A673 (cell line): ENCODE measurements at regions of chr12 and their contacts with region 1.

Region 1: GRCh38 chr12:95532851-95533250 is 18.4 kb downstream of the USP44 start:
- DNase-seq: no peak
- H3K4me3 ChIP-seq: no peak overlapping the region
- H3K27ac ChIP-seq: no peak overlapping the region
- H3K4me1 ChIP-seq: no peaks in the 10 kb centered on the region
- H3K27me3 ChIP-seq: no peaks in the 10 kb centered on the region
- CTCF ChIP-seq: no peak

Region 2: GRCh38 chr12:94133964-94134795 is 1398.7 kb before region 1 on chr12:
- CTCF ChIA-PET with region 1: no interaction called
- POLR2A ChIA-PET with region 1: no interaction called
- intact Hi-C with region 1: loop called (anchors 10 kb)
- DNase-seq: peak; percentile 70
- H3K4me3 ChIP-seq: no peak overlapping the region
- H3K27ac ChIP-seq: no peak overlapping the region
- H3K4me1 ChIP-seq: no peaks in the 10 kb centered on the region
- H3K27me3 ChIP-seq: peaks cover 4% of the 10 kb centered on the region
- CTCF ChIP-seq: peak; percentile 76

Region 3: GRCh38 chr12:94545935-94546771 is 986.7 kb before region 1 on chr12:
- CTCF ChIA-PET with region 1: no interaction called
- POLR2A ChIA-PET with region 1: no interaction called
- intact Hi-C with region 1: loop called (anchors 10 kb)
- DNase-seq: peak; percentile 40
- H3K4me3 ChIP-seq: no peak overlapping the region
- H3K27ac ChIP-seq: no peak overlapping the region
- H3K4me1 ChIP-seq: no peaks in the 10 kb centered on the region
- H3K27me3 ChIP-seq: no peaks in the 10 kb centered on the region
- CTCF ChIP-seq: peak; percentile 59

Region 4: DNA sequence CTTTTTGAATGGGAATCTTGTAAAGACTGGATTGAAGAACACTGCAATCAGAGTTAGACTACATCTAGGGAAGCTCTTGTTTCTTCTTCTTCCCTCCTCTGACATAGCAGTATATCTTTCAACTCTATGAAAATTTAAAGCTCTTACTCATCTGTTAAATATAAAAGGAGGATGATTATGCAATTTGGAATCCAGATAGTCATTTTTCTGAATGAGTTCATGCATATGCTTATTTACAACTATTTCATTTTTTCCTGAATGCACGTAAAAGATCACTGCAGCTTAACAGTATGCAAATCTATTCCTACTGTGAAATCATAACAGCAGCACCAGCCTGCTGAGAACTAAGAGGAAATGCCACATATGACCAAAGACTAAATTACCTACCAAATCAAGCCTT is 749.0 kb before region 1 on chr12:
- CTCF ChIA-PET with region 1: no interaction called
- POLR2A ChIA-PET with region 1: no interaction called
- intact Hi-C with region 1: loop called (anchors 10 kb)
- DNase-seq: peak; percentile 78
- H3K4me3 ChIP-seq: no peak overlapping the region
- H3K27ac ChIP-seq: peak overlapping the region; percentile 12
- H3K4me1 ChIP-seq: peaks cover 6% of the 10 kb centered on the region
- H3K27me3 ChIP-seq: no peaks in the 10 kb centered on the region
- CTCF ChIP-seq: no peak

Region 5: GRCh38 chr12:95117178-95117599 is 415.7 kb before region 1 on chr12:
- CTCF ChIA-PET with region 1: interaction called, 17 read pairs
- POLR2A ChIA-PET with region 1: no interaction called
- intact Hi-C with region 1: loop called (anchors 2 kb)
- DNase-seq: peak; percentile 84
- H3K4me3 ChIP-seq: no peak overlapping the region
- H3K27ac ChIP-seq: no peak overlapping the region
- H3K4me1 ChIP-seq: no peaks in the 10 kb centered on the region
- H3K27me3 ChIP-seq: no peaks in the 10 kb centered on the region
- CTCF ChIP-seq: peak; percentile 78

Region 6: GRCh38 chr12:95336390-95337067 is 196.3 kb before region 1 on chr12:
- CTCF ChIA-PET with region 1: no interaction called
- POLR2A ChIA-PET with region 1: no interaction called
- intact Hi-C with region 1: loop called (anchors 10 kb)
- DNase-seq: peak; percentile 80
- H3K4me3 ChIP-seq: no peak overlapping the region
- H3K27ac ChIP-seq: no peak overlapping the region
- H3K4me1 ChIP-seq: peaks cover 18% of the 10 kb centered on the region
- H3K27me3 ChIP-seq: no peaks in the 10 kb centered on the region
- CTCF ChIP-seq: peak; percentile 85